Activated CD4-positive, alpha-beta T cell treated with anti-CD3 and anti-CD28 coated beads, Interleukin-2, amount 10 ng/mL, durations not matched to agents 24 days and 14 days (primary cell): ENCODE measurements at regions of chr2 and their contacts with region 1.

Region 1: DNA sequence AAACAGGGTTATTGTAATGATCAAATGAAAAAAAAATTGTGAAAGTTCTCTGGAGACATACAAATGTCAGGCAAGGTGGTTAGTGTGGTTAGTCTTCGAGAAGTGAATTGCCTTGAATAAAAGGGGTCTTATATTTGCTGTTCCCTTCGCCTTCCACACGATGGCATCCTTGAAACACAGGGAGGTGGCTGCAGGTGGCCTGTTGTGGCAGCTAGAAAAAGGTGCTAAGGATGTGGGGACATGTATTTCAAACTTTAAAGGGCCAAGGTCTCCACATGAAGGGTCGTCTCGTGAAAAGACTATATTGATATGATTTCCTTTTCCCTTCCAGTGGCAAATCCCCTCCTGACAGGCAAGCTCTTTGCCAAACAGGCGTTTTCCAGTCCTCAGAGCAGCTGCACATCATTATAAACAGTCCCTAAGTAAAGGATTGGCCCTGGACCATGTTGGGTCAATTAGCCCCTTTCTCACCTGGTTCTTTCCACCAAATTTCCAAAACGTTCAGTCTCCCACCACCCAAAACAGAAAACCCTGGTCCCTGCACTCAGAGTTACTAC is 68.5 kb downstream of the COPS8 start:
- DNase-seq: peak; percentile 87
- H3K4me3 Mint-ChIP-seq: no peak overlapping the region
- H3K27ac Mint-ChIP-seq: peak overlapping the region; percentile 91
- H3K4me1 Mint-ChIP-seq: peaks cover 36% of the 10 kb centered on the region
- H3K27me3 Mint-ChIP-seq: no peaks in the 10 kb centered on the region

Region 2: DNA sequence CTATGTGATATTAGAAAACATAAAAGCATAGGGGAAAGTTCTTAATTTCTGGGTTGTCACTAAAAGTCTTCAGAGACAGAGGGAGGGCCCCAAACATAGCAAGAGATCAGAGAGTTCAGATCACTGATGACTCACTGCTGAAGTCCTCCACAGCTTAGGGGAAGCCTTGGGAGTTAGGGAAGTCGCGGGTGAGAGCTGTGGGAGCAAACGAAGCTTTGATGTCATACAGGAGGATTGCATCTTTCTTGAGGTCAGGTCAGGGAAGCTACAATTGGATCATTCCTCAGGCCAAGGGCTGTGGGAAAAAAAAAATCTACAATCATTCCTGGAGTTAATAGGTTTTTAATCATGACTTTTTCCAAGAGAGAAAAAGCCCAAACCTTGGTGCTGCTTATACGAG is 27.7 kb after region 1 on chr2:
- intact Hi-C with region 1: no loop called
- DNase-seq: peak; percentile 22
- H3K4me3 Mint-ChIP-seq: no peak overlapping the region
- H3K27ac Mint-ChIP-seq: no peak overlapping the region
- H3K4me1 Mint-ChIP-seq: no peaks in the 10 kb centered on the region
- H3K27me3 Mint-ChIP-seq: peaks cover 4% of the 10 kb centered on the region

Region 3: DNA sequence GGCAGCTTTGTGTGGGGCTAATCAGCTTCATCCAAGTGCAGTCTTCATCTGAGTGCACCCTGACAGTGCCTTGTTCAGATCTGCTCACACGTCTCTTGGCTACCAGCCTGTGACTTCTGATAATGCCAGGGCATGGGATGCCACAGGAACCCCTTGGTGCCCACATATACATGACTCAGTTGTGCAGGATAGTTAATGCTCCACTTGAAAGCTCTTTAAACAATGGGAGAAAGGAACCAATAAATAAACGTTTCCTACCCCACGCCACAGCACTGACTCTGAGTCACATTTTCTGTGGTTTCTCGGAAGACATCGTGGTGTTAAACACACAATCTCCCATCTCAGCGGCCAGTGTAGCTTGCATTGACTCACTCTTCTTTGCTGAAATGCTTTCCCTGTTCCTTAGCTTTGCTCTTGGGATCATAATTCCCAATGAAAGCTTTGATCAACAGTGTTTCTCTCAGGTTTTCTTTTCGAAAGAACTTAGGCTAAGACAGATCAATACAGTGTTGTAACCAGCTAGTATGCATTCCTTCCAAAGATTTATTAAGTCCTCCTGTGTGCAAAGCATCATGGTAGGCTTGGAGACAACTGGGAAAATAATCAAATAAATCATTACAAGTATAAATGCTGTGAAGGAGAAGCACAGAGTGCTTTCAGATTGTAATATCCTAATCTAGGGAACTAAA is 73.6 kb after region 1 on chr2:
- intact Hi-C with region 1: loop called (anchors 5 kb)
- DNase-seq: peak; percentile 59
- H3K4me3 Mint-ChIP-seq: no peak overlapping the region
- H3K27ac Mint-ChIP-seq: peak overlapping the region; percentile 45
- H3K4me1 Mint-ChIP-seq: peaks cover 15% of the 10 kb centered on the region
- H3K27me3 Mint-ChIP-seq: peaks cover 20% of the 10 kb centered on the region

Region 4: GRCh38 chr2:237354892-237355291 is 200.7 kb after region 1 on chr2:
- intact Hi-C with region 1: no loop called
- DNase-seq: no peak
- H3K4me3 Mint-ChIP-seq: no peak overlapping the region
- H3K27ac Mint-ChIP-seq: no peak overlapping the region
- H3K4me1 Mint-ChIP-seq: no peaks in the 10 kb centered on the region
- H3K27me3 Mint-ChIP-seq: no peaks in the 10 kb centered on the region

Region 5: DNA sequence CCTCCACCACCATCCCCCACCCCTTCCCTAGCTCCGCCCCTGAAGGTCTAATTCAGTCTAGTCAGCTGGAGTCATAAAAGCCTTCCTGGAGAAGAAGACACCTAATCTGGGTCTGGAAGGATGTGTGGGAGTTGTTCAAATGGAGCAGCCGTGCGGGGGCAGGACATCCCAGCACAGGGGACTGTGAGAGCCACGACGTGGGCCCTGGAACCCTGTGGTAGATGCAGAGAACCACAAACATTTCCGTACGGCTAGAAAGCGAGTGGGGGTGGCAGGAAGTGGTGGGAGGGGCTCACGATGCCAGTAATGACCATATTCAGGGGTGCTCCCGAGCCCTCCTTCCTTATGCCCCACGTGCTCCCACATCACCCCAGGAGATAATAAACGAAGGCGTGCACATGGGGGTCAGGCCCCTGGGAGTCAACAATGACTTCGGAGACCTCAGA is 280.7 kb after region 1 on chr2:
- intact Hi-C with region 1: loop called (anchors 1 kb)
- DNase-seq: peak; percentile 92
- H3K4me3 Mint-ChIP-seq: peak overlapping the region; percentile 89
- H3K27ac Mint-ChIP-seq: peak overlapping the region; percentile 95
- H3K4me1 Mint-ChIP-seq: peaks cover 79% of the 10 kb centered on the region
- H3K27me3 Mint-ChIP-seq: no peaks in the 10 kb centered on the region

Region 6: GRCh38 chr2:237572021-237572741 is 418.0 kb after region 1 on chr2:
- intact Hi-C with region 1: loop called (anchors 1 kb)
- DNase-seq: peak; percentile 95
- H3K4me3 Mint-ChIP-seq: no peak overlapping the region
- H3K27ac Mint-ChIP-seq: no peak overlapping the region
- H3K4me1 Mint-ChIP-seq: peaks cover 5% of the 10 kb centered on the region
- H3K27me3 Mint-ChIP-seq: no peaks in the 10 kb centered on the region